ENCODE measurements at regions of chr16 and their contacts with region 1.

Region 1: GRCh38 chr16:58025351-58026138 is at the start of gene MMP15:
- DNase-seq: peak; percentile 27 to 74 (median 43)
- ATAC-seq: peak; percentile 76
- H3K4me3 ChIP-seq: peak within 1 kb of the TSS; percentile 78
- H3K4me3 Mint-ChIP-seq: peak within 1 kb of the TSS; percentile 90 to 95 (median 93)
- H3K27ac ChIP-seq: no peak within 1 kb of the TSS
- H3K27ac Mint-ChIP-seq: peak within 1 kb of the TSS; percentile 73 to 90 (median 84)
- H3K4me1 ChIP-seq: peaks cover 8 to 9% of the 10 kb centered on the region in 2 donors
- H3K4me1 Mint-ChIP-seq: peaks cover 6 to 18% (median 12%) of the 10 kb centered on the region in 7 donors
- H3K27me3 ChIP-seq: no peaks in the 10 kb centered on the region
- H3K27me3 Mint-ChIP-seq: peaks cover 0 to 39% (median 3%) of the 10 kb centered on the region in 5 donors
- total RNA-seq, gene MMP15: 0.20 to 0.85 (median 0.69) TPM

Region 2: GRCh38 chr16:57984331-57985203 is 41.0 kb before region 1 on chr16:
- CTCF ChIA-PET with region 1: no interaction called
- POLR2A ChIA-PET with region 1: no interaction called
- intact Hi-C with region 1: loop called in 1 of 2 experiments (anchors 1 kb)
- DNase-seq: peak; percentile 75 to 93 (median 90)
- ATAC-seq: peak; percentile 99
- H3K4me3 ChIP-seq: peak overlapping the region; percentile 63
- H3K4me3 Mint-ChIP-seq: peak overlapping the region; percentile 84 to 94 (median 91)
- H3K27ac ChIP-seq: peak overlapping the region; percentile 64
- H3K27ac Mint-ChIP-seq: peak overlapping the region; percentile 37 to 93 (median 72)
- H3K4me1 ChIP-seq: peaks cover 6% of the 10 kb centered on the region in 2 donors
- H3K4me1 Mint-ChIP-seq: peaks cover 2 to 21% (median 8%) of the 10 kb centered on the region in 7 donors
- H3K27me3 ChIP-seq: no peaks in the 10 kb centered on the region
- H3K27me3 Mint-ChIP-seq: peaks cover 0 to 21% (median 0%) of the 10 kb centered on the region in 5 donors

Region 3: GRCh38 chr16:58249780-58250478 is 224.4 kb after region 1 on chr16:
- CTCF ChIA-PET with region 1: no interaction called
- POLR2A ChIA-PET with region 1: no interaction called
- intact Hi-C with region 1: loop called (anchors 2 to 5 kb)
- DNase-seq: peak; percentile 74 to 91 (median 86)
- ATAC-seq: peak; percentile 98
- H3K4me3 ChIP-seq: peak overlapping the region; percentile 77
- H3K4me3 Mint-ChIP-seq: peak overlapping the region; percentile 77 to 87 (median 82)
- H3K27ac ChIP-seq: peak overlapping the region; percentile 43
- H3K27ac Mint-ChIP-seq: peak overlapping the region in 8 of 9 donors; percentile 31 to 86 (median 67)
- H3K4me1 ChIP-seq: peaks cover 5 to 7% of the 10 kb centered on the region in 2 donors
- H3K4me1 Mint-ChIP-seq: peaks cover 6 to 13% (median 12%) of the 10 kb centered on the region in 7 donors
- H3K27me3 ChIP-seq: no peaks in the 10 kb centered on the region
- H3K27me3 Mint-ChIP-seq: peaks cover 0 to 17% (median under 1%) of the 10 kb centered on the region in 5 donors

Region 4: GRCh38 chr16:58306327-58306726 is 280.8 kb after region 1 on chr16:
- CTCF ChIA-PET with region 1: no interaction called
- POLR2A ChIA-PET with region 1: no interaction called
- intact Hi-C with region 1: loop called in 1 of 2 experiments (anchors 1 kb)
- DNase-seq: peak; percentile 8 to 51 (median 25)
- ATAC-seq: no peak
- H3K4me3 ChIP-seq: no peak overlapping the region
- H3K4me3 Mint-ChIP-seq: no peak overlapping the region
- H3K27ac ChIP-seq: no peak overlapping the region
- H3K27ac Mint-ChIP-seq: no peak overlapping the region
- H3K4me1 ChIP-seq: no peaks in the 10 kb centered on the region
- H3K4me1 Mint-ChIP-seq: no peaks in the 10 kb centered on the region
- H3K27me3 ChIP-seq: no peaks in the 10 kb centered on the region
- H3K27me3 Mint-ChIP-seq: peaks cover 0 to 27% (median 18%) of the 10 kb centered on the region in 5 donors